WTC11 (cell line): ENCODE measurements at regions of chr22 and their contacts with region 1.

Region 1: DNA sequence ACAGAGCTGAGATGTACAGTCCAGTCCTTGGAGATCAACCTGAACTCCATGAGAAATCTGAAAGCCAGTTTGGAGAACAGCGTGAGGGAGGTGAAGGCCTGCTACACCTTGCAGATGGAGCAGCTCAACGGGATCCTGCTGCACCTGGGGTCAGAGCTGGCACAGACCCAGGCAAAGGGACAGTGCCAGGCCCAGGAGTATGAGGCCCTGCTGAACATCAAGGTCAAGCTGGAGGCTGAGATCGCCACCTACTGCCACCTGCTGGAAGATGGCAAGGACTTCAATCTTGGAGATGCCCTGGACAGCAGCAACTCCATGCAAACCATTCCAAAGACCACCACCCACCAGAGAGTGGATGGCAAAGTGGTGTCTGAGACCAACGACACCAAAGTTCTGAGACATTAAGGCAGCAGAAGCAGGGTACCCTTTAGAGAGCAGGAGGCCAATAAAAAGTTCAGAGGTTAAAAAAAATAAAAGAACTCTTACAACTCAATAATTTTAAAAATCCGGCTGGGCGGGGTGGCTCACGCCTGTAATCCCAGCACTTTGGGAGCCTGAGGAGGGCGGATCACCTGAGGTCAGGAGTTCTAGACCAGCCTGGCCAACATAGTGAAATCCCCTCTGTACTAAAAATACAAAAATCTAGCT is 69.9 kb upstream of the RTL6 start:
- DNase-seq: peak; percentile 66
- ATAC-seq: no peak
- H3K4me3 Mint-ChIP-seq: no peak overlapping the region
- H3K27ac Mint-ChIP-seq: no peak overlapping the region
- H3K4me1 Mint-ChIP-seq: no peaks in the 10 kb centered on the region
- H3K27me3 Mint-ChIP-seq: no peaks in the 10 kb centered on the region
- CTCF ChIP-seq: no peak

Region 2: GRCh38 chr22:44550711-44551491 is 17.1 kb before region 1 on chr22:
- CTCF ChIA-PET with region 1: interaction called, 11 read pairs
- POLR2A ChIA-PET with region 1: no interaction called
- DNase-seq: no peak
- ATAC-seq: no peak
- H3K4me3 Mint-ChIP-seq: no peak overlapping the region
- H3K27ac Mint-ChIP-seq: no peak overlapping the region; the same call in 1 of the 2 replicates
- H3K4me1 Mint-ChIP-seq: peaks cover 14% of the 10 kb centered on the region
- H3K27me3 Mint-ChIP-seq: peaks cover 2% of the 10 kb centered on the region; the same call in 1 of the 2 replicates
- CTCF ChIP-seq: no peak

Region 3: GRCh38 chr22:44684506-44685383 is 116.8 kb after region 1 on chr22:
- CTCF ChIA-PET with region 1: no interaction called
- POLR2A ChIA-PET with region 1: no interaction called
- DNase-seq: peak; percentile 92
- ATAC-seq: peak; percentile 89
- H3K4me3 Mint-ChIP-seq: no peak overlapping the region
- H3K27ac Mint-ChIP-seq: no peak overlapping the region
- H3K4me1 Mint-ChIP-seq: peaks cover 10% of the 10 kb centered on the region
- H3K27me3 Mint-ChIP-seq: peaks cover under 1% of the 10 kb centered on the region; the same call in 1 of the 2 replicates
- CTCF ChIP-seq: peak; percentile 90